ENCODE measurements at regions of chr12 and their contacts with region 1.

Region 1: GRCh38 chr12:42023733-42024494 is 120.8 kb downstream of the GXYLT1 start:
- DNase-seq: peak; percentile 65
- H3K4me3 ChIP-seq: peak overlapping the region; percentile 63
- H3K27ac ChIP-seq: no peak overlapping the region
- H3K4me1 ChIP-seq: peaks cover 6% of the 10 kb centered on the region
- H3K27me3 ChIP-seq: no peaks in the 10 kb centered on the region
- CTCF ChIP-seq: peak; percentile 96

Region 2: DNA sequence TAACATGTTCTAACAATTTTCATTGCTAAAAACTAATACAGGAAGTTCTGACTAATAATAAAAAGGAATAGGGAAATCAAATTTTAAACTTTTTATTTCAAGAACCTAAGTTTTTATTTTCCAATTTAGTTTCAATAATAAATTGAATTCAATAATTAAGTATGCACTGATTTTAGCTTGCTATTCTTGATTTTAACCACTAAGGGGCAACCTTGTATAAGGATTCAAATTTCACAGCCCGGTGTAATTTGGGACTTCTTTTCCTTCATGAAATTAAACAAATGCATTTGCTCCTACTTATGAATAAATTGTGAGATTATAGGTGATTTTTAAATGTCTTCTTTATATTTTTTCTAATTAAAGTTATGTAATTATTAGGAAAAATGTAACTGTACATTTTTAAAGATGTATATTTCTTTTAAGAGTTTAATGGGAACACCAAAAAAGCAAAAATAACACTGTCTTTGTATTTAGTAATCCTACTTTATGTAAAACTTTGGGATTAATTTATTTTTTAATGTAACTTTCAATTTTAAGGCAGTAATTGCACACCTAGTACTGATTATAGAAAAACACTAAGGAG is 1077.2 kb before region 1 on chr12:
- intact Hi-C with region 1: loop called (anchors 5 kb)
- DNase-seq: no peak
- H3K4me3 ChIP-seq: no peak overlapping the region
- H3K27ac ChIP-seq: no peak overlapping the region
- H3K4me1 ChIP-seq: no peaks in the 10 kb centered on the region
- H3K27me3 ChIP-seq: peaks cover 13% of the 10 kb centered on the region
- CTCF ChIP-seq: peak; percentile 67

Region 3: DNA sequence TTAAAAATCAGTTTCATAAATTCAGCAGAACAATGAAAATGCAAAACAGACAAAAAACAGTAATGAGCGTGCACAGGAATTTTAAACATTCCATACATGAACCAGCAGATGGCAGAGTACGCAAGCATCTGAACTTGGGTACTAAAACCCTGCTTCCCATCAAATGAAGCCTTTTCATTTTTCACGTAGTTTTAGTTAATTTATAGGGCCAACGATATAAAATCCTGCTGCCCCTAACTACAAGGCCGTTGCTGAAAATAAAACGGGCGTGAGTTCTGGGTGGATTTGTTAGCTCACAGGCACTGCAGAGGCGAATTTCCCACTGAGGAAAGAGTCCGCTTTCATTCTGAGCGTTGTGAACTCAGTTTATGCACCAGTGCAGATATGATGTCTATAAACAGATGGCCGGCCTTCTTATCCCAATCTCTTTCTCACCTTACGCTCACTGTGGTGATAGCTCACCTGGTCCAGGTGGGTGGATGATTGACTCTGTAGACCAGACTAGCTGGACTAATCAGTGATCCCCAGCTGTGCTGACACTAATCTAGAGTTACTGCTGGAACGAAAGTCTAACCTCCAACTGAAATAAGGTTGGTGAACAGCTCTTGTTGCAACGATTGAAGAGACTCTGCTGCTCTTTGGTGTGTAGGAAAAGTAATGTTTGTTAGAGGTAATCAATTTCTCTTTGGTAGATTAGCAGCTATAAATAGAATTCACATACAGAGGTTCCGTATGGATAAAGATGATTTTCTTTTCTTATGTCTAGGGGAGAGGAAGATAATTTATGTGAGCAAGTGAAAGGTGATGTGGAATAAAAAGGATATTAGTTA is 746.6 kb before region 1 on chr12:
- intact Hi-C with region 1: loop called (anchors 5 kb)
- DNase-seq: no peak
- H3K4me3 ChIP-seq: no peak overlapping the region
- H3K27ac ChIP-seq: no peak overlapping the region
- H3K4me1 ChIP-seq: no peaks in the 10 kb centered on the region
- H3K27me3 ChIP-seq: no peaks in the 10 kb centered on the region
- CTCF ChIP-seq: peak; percentile 72

Measured in left ventricle myocardium inferior (tissue), 1 donor.